ENCODE measurements at regions of chr14 and their contacts with region 1.

Region 1: DNA sequence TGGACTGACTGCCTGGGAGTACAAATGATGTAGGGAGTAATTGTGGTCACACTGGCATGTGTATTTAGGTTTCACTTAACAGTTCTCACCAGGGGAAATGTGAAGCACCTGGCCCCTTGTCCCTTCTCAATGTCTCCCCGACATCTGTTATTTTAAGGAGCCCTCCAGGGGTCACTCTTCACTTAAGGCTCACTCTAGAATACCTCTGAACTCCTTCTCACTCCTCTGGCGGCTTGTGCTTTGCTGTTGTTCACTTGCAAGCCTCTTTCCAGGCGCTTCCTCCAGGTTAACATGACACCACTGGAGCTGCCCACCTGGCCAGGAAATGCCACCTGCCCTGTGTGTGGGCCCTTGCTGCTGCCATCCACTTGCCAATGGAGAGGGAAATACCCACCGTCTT is 56.5 kb upstream of the GZMB start:
- DNase-seq: no peak
- H3K4me3 Mint-ChIP-seq: no peak overlapping the region
- H3K27ac Mint-ChIP-seq: no peak overlapping the region
- H3K4me1 Mint-ChIP-seq: peaks cover 31% of the 10 kb centered on the region
- H3K27me3 Mint-ChIP-seq: peaks cover 1% of the 10 kb centered on the region

Region 2: DNA sequence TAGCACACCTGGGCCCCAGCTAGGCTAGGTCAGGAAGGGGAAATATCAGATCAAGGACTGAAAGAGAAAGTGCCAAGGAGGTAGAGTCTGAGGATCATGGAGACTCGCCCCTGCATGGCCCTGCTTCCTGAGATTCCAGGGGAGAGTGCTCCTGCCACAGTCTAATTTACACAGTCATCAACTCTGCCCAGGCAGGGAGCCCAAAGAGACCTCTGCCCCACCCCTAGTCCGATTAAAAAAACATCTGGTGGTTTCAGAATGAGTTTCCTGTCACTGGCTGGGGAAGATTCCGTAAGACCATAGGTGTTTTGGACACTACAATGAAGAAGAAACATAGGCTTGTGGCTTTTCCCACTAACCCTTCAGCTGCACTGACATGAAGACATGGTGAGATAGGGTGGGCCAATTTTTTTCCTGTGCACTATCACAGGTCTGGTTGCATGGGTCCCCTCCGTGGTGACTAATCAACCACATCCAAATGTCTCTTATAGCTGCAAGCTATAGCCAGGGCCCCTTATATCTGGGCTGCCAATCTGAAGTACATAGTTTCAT is 25.0 kb before region 1 on chr14:
- CTCF ChIA-PET with region 1: interaction called, 6 read pairs
- POLR2A ChIA-PET with region 1: interaction called, 12 read pairs
- DNase-seq: peak; percentile 72
- H3K4me3 Mint-ChIP-seq: peak overlapping the region; percentile 49
- H3K27ac Mint-ChIP-seq: peak overlapping the region; percentile 81
- H3K4me1 Mint-ChIP-seq: peaks cover 90% of the 10 kb centered on the region
- H3K27me3 Mint-ChIP-seq: no peaks in the 10 kb centered on the region

Region 3: GRCh38 chr14:24673534-24674203 is 16.8 kb before region 1 on chr14:
- CTCF ChIA-PET with region 1: interaction called, 15 read pairs
- POLR2A ChIA-PET with region 1: interaction called, 45 read pairs
- DNase-seq: peak; percentile 83
- H3K4me3 Mint-ChIP-seq: peak overlapping the region; percentile 76
- H3K27ac Mint-ChIP-seq: peak overlapping the region; percentile 97
- H3K4me1 Mint-ChIP-seq: peaks cover 88% of the 10 kb centered on the region
- H3K27me3 Mint-ChIP-seq: no peaks in the 10 kb centered on the region

Region 4: GRCh38 chr14:24761141-24761540 is 70.6 kb after region 1 on chr14:
- CTCF ChIA-PET with region 1: no interaction called
- POLR2A ChIA-PET with region 1: no interaction called
- DNase-seq: no peak
- H3K4me3 Mint-ChIP-seq: no peak overlapping the region
- H3K27ac Mint-ChIP-seq: no peak overlapping the region
- H3K4me1 Mint-ChIP-seq: no peaks in the 10 kb centered on the region
- H3K27me3 Mint-ChIP-seq: peaks cover 14% of the 10 kb centered on the region

Region 5: GRCh38 chr14:24817212-24818057 is 126.9 kb after region 1 on chr14:
- CTCF ChIA-PET with region 1: no interaction called
- POLR2A ChIA-PET with region 1: no interaction called
- DNase-seq: no peak
- H3K4me3 Mint-ChIP-seq: no peak overlapping the region
- H3K27ac Mint-ChIP-seq: no peak overlapping the region
- H3K4me1 Mint-ChIP-seq: no peaks in the 10 kb centered on the region
- H3K27me3 Mint-ChIP-seq: peaks cover 26% of the 10 kb centered on the region